Dorsolateral prefrontal cortex (tissue), 120 donors: ENCODE measurements at regions of chr2 and their contacts with region 1.

Region 1: GRCh38 chr2:112062894-112063293 is 7.8 kb downstream of the TMEM87B start:
- DNase-seq: no peak
- H3K4me3 ChIP-seq: no peak overlapping the region
- H3K27ac ChIP-seq: no peak overlapping the region
- H3K27me3 ChIP-seq: no peaks in the 10 kb centered on the region
- CTCF ChIP-seq: no peak

Region 2: GRCh38 chr2:112121682-112122254 is 58.9 kb after region 1 on chr2:
- intact Hi-C with region 1: loop called in 1 of 2 experiments (anchors 5 kb)
- DNase-seq: no peak
- H3K4me3 ChIP-seq: no peak overlapping the region
- H3K27ac ChIP-seq: no peak overlapping the region
- H3K27me3 ChIP-seq: no peaks in the 10 kb centered on the region
- CTCF ChIP-seq: peak; percentile 48 to 82 (median 70)

Region 3: DNA sequence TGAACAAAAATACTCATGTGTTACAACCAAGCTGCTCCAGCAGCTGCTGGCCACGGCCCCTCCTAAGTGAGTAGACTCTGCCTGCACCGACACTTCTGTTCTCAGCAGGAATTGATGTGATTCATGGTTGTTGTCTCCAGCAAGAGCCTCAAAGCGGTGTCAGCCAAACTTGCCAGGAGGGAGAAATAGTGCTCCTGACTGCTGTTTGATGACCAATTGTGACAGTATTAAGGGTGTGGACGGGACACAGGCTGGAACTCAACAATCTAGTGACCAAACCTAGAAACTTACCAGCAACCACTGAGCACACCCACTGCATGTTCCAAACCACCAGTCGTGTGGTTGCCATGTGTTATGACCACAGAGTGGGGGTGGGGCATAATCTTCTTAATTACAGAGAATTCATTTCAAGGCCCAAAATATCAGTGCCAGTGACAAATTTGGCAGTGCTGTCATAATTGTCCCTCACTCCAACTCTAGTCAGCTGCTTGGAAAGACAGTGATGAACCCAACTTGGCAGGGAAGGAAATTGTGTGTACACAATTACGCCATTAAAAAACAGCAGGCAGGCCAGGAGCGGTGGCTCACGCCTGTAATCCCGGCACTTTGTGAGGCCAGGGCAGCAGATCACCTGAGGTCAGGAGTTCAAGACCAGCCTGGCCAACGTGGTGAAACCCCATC is 105.7 kb after region 1 on chr2:
- intact Hi-C with region 1: no loop called
- DNase-seq: no peak
- H3K4me3 ChIP-seq: no peak overlapping the region
- H3K27ac ChIP-seq: peak overlapping the region in 1 of 59 donors; percentile 2
- H3K27me3 ChIP-seq: no peaks in the 10 kb centered on the region
- CTCF ChIP-seq: no peak